H1 (cell line): ENCODE measurements at regions of chr2 and their contacts with region 1.

Region 1: GRCh38 chr2:200713003-200713703 is 98.6 kb upstream of the BZW1 start:
- DNase-seq: peak; percentile 43 to 74
- H3K4me3 ChIP-seq: peak overlapping the region in 3 of 4 experiments; percentile 17 to 50 (median 23); a peak in 4 of 8 replicates
- H3K27ac ChIP-seq: peak overlapping the region; percentile 36; the same call in 1 of the 2 replicates
- H3K4me1 ChIP-seq: peaks cover 0 to 5% (median 0%) of the 10 kb centered on the region in 4 experiments; a peak in 1 of 7 replicates
- H3K27me3 ChIP-seq: no peaks in the 10 kb centered on the region
- CTCF ChIP-seq: peak; percentile 39 to 72 (median 72)
- EP300 ChIP-seq: no peak
- POLR2A ChIP-seq: peak in 1 of 2 experiments; percentile 47; a peak in 1 of 3 replicates
- RAD21 ChIP-seq: peak; percentile 90

Region 2: GRCh38 chr2:200698217-200698616 is 14.9 kb before region 1 on chr2:
- CTCF ChIA-PET with region 1: interaction called, 25 read pairs
- POLR2A ChIA-PET with region 1: no interaction called
- DNase-seq: no peak
- H3K4me3 ChIP-seq: no peak overlapping the region
- H3K27ac ChIP-seq: no peak overlapping the region
- H3K4me1 ChIP-seq: peaks cover 0 to 2% (median 0%) of the 10 kb centered on the region in 4 experiments; a peak in 2 of 7 replicates
- H3K27me3 ChIP-seq: no peaks in the 10 kb centered on the region
- CTCF ChIP-seq: peak in 1 of 3 experiments; percentile 1; a peak in 1 of 4 replicates
- EP300 ChIP-seq: no peak
- POLR2A ChIP-seq: no peak
- RAD21 ChIP-seq: 0 out of 4 replicates have a peak, but pooled peaks of 1 of the 2 experiments have one; percentile 7

Region 3: DNA sequence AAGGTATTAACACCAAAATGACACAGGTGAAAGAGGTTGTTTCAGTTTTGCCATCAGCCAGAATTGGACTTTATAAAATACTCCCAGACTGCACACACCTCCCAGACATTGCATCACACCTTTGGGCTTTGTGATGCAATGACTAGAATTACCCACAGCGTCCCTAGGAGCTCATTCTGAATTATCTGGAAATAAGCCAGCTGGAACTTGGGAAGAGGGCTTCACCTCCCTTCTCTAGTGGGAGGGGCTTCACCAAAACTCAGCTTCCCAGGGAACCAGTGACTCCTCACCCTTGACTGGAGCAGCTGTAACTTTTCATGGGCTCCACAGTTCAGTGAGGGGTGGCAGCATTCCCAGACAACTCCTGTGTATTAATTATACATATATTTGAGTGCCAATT is 15.5 kb after region 1 on chr2:
- CTCF ChIA-PET with region 1: interaction called, 130 read pairs
- POLR2A ChIA-PET with region 1: interaction called, 3 read pairs
- DNase-seq: no peak
- H3K4me3 ChIP-seq: no peak overlapping the region
- H3K27ac ChIP-seq: no peak overlapping the region
- H3K4me1 ChIP-seq: peaks cover 0 to 10% (median 5%) of the 10 kb centered on the region in 4 experiments; a peak in 4 of 7 replicates
- H3K27me3 ChIP-seq: 0 out of 7 replicates have a peak, but pooled peaks cover 0 to 2% (median 0%) of the 10 kb centered on the region in 4 experiments
- CTCF ChIP-seq: no peak
- EP300 ChIP-seq: no peak
- POLR2A ChIP-seq: no peak
- RAD21 ChIP-seq: no peak

Region 4: DNA sequence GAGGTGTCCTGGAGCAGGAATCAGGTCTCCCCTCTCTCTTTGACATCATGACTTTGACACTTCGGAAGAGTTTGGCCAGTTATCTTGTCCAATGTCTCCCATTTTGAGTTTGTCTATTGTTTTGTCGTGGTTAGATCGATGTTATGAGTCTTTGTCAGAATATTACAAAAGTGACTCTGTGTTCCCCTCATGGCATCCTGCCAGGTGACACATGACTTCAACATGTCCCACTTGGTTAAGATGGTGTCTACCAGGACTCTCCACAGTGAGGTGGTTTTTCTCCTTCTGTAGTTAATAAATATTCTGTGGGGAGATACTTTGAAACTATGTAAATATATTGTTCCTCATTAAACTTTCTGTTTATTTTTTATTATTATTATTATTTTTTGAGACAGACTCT is 21.9 kb after region 1 on chr2:
- CTCF ChIA-PET with region 1: interaction called, 130 read pairs
- POLR2A ChIA-PET with region 1: interaction called, 3 read pairs
- DNase-seq: no peak
- H3K4me3 ChIP-seq: no peak overlapping the region
- H3K27ac ChIP-seq: no peak overlapping the region
- H3K4me1 ChIP-seq: peaks cover 5 to 22% (median 19%) of the 10 kb centered on the region in 4 experiments; a peak in 5 of 7 replicates
- H3K27me3 ChIP-seq: no peaks in the 10 kb centered on the region
- CTCF ChIP-seq: no peak
- EP300 ChIP-seq: no peak
- POLR2A ChIP-seq: no peak
- RAD21 ChIP-seq: no peak

Region 5: GRCh38 chr2:200845669-200846325 is 132.6 kb after region 1 on chr2:
- CTCF ChIA-PET with region 1: no interaction called
- POLR2A ChIA-PET with region 1: no interaction called
- DNase-seq: no peak
- H3K4me3 ChIP-seq: no peak overlapping the region
- H3K27ac ChIP-seq: no peak overlapping the region
- H3K4me1 ChIP-seq: no peaks in the 10 kb centered on the region
- H3K27me3 ChIP-seq: no peaks in the 10 kb centered on the region
- CTCF ChIP-seq: no peak
- EP300 ChIP-seq: no peak
- POLR2A ChIP-seq: no peak
- RAD21 ChIP-seq: no peak